Psoas muscle (tissue), 8 donors: ENCODE measurements at regions of chr6 and their contacts with region 1.

Region 1: DNA sequence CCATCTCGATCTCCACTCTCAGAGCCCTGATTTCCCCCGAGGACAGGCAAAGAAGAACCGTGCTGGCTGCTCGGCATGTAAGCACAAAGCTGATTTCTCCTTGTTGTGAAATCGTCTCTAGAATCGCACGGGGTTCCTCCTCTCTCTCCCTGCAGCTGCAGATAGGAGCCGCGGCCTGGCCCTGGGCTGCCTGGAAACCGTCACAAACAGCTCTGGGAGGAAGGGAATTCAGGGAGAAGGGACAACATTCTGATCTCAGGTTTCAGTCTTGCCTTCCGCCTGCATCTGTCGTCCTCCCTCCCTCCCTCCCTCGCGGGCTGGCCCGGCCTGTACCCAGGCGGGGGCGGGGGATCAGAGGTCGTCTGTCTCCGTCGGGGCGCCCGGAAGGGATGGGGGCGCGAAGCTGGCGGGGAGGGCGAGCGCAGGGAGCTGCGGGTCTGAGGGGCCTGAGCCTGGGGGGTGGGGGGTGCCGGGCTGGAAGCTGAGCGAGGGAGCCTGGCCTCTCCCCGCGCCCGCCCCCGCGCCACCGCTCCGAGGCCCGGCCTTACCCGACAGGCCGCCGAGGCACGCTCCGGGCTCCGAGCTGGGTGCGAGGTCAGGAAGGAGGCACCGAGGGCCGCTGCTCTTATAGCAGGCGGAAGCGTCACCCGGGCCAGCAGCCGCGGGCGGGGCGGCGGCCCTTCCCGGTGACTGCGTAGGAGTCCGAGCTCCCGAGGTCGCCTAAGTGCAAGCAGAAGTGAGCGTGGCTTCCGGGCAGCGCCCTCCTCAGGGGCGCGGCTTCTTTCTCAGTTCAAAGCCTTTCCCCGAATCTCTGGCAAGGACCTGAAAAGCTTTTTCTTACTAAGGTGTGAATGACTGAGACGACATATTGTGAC is at the start of gene SERPINB1:
- DNase-seq: peak; percentile 92 to 95
- ATAC-seq: peak; percentile 85 to 93 (median 92)
- H3K4me3 ChIP-seq: peak within 1 kb of the TSS; percentile 73
- H3K27ac ChIP-seq: peak within 1 kb of the TSS; percentile 97
- H3K4me1 ChIP-seq: peaks cover 34% of the 10 kb centered on the region
- H3K27me3 ChIP-seq: no peaks in the 10 kb centered on the region
- CTCF ChIP-seq: no peak
- total RNA-seq, gene SERPINB1: 10.2 to 62.0 (median 52.2) TPM

Region 2: GRCh38 chr6:1686117-1687098 is 1155.1 kb before region 1 on chr6:
- intact Hi-C with region 1: no loop called
- DNase-seq: peak in 1 of 2 donors; percentile 23
- ATAC-seq: peak; percentile 66 to 90 (median 79)
- H3K4me3 ChIP-seq: no peak overlapping the region
- H3K27ac ChIP-seq: peak overlapping the region; percentile 47
- H3K4me1 ChIP-seq: peaks cover 9% of the 10 kb centered on the region
- H3K27me3 ChIP-seq: no peaks in the 10 kb centered on the region
- CTCF ChIP-seq: peak; percentile 24

Region 3: DNA sequence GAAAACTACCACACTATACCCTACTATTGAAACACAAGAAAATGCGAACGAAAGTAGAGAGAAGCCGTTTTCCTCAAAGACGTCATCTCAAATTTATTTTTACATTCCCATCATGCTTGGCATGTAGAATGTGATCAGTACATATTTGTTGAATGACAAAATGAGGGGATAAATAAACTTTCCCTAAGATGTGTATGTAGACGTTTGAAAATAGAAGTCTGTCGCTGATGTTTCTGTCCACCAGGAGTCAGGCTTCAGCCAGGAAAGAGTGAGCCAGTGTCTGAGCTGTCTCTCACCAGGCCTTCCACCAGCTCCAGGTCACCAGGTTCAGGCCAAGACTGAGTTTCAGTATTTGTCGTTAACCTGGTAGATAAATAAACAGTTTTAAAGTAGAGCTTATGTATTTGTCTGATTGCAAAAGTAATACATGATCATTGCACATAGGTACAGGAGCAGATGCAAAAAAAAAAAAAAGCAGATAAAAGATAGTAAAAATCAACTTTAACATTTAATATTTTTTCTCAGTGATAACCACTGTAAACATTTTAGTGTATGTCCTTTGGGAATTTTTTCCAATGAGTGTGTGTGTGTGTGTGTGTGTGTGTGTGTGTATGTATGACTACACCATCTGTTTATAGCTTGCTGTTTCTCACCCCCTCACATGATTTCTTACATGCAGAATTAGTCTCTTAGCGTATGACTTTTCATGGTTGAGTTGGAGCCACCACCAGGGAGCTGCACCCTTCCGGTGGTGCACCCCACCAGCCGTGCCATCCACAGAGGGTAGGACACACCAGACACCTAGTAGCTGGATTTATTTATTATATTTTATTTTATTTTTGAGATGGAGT is 50.2 kb before region 1 on chr6:
- intact Hi-C with region 1: loop called (anchors 2 to 5 kb)
- DNase-seq: peak; percentile 47 to 73
- ATAC-seq: peak; percentile 68 to 91 (median 86)
- H3K4me3 ChIP-seq: peak overlapping the region; percentile 55
- H3K27ac ChIP-seq: peak overlapping the region; percentile 92
- H3K4me1 ChIP-seq: peaks cover 28% of the 10 kb centered on the region
- H3K27me3 ChIP-seq: no peaks in the 10 kb centered on the region
- CTCF ChIP-seq: peak; percentile 78

Region 4: DNA sequence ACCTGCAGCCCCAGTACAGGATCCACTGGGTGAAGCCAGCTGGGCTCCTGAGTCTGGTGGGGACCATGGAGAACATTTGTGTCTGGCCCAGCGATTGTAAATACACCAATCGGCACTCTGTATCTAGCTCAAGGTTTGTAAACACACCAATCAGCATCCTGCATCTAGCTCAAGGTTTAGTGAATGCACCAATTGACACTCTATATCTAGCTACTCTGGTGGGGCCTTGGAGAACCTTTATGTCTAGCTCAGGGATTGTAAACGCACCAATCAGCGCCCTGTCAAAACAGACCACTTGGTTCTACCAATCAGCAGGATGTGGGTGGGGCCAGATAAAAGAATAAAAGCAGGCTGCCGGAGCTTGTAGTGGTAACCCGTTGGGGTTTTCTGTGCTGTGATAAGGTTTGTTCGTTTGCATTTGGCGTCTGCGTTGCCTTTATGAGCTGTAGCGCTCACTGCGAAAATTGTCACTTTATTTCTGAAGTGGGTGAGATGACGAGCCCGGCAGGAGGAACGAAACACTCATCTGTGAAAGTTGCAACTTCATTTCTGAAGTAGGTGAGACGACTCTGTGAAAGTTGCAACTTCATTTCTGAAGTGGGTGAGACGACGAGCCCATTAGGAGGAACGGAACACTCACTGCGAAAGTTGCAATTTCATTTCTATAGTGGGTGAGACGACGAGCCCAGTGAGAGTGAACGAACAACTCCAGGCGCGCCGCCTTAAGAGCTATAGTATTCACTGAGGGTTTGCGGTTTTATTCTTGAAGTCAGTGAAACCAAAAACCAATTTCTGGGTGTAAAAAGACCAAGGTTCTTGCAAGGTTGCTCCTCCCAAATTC is 98.7 kb after region 1 on chr6:
- intact Hi-C with region 1: no loop called
- DNase-seq: no peak
- ATAC-seq: no peak
- H3K4me3 ChIP-seq: no peak overlapping the region
- H3K27ac ChIP-seq: no peak overlapping the region
- H3K4me1 ChIP-seq: peaks cover 17% of the 10 kb centered on the region
- H3K27me3 ChIP-seq: no peaks in the 10 kb centered on the region
- CTCF ChIP-seq: no peak

Region 5: GRCh38 chr6:3052481-3053230 is 211.2 kb after region 1 on chr6:
- intact Hi-C with region 1: loop called (anchors 2 to 5 kb)
- DNase-seq: no peak
- ATAC-seq: no peak
- H3K4me3 ChIP-seq: no peak overlapping the region
- H3K27ac ChIP-seq: no peak overlapping the region
- H3K4me1 ChIP-seq: no peaks in the 10 kb centered on the region
- H3K27me3 ChIP-seq: peaks cover 0 to 3% (median 0%) of the 10 kb centered on the region in 3 donors
- CTCF ChIP-seq: no peak